Transverse colon (tissue), 4 donors: ENCODE measurements at regions of chr14 and their contacts with region 1.

Region 1: DNA sequence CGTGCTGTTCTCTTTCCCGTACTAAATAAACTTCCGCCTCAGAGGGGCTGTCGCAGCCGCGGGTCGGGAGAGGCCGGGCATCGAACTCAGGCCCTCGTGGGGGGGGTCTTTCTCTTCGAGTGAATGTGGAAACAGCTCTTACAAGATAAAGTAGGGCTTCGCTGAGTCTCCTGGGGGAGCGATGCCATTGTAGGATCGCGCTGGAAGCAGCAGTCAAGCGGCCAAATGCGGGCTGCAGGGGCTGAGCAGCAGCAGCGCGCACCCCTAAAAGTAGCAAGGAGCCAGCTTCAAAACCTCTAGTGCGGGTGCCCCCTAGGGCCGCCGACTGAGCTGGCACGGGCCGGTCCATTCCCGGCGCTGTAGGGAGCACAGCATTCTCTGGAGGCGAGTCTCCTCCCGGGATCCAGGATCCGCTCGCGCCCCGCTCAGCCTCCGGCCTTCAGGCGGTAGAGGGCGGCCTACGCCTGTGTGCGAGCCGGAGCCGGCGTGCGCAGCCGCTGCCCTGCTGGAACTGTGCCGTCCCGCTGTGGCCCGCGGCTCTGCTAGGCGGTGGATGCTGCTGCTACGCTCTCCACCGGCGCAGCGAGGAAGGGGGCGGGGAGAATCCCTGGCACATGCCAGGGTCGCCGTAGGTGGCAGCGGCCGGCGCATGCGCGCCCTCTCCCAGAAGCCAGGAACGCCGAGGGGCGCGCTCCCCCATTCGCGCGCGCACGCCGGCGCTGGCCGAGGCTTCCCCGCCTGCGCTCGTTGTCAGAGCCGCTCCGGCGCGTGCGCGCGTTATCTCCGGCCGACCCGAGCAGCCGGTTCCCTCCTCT is at the start of gene FUT8:
- DNase-seq: peak; percentile 96
- H3K4me3 ChIP-seq: peak within 1 kb of the TSS; percentile 49 to 86 (median 84)
- H3K27ac ChIP-seq: peak within 1 kb of the TSS; percentile 89 to 98 (median 94)
- H3K4me1 ChIP-seq: peaks cover 0 to 21% (median 7%) of the 10 kb centered on the region in 4 donors
- H3K27me3 ChIP-seq: no peaks in the 10 kb centered on the region
- CTCF ChIP-seq: peak; percentile 37 to 65 (median 52)
- EP300 ChIP-seq: no peak
- POLR2A ChIP-seq: peak; percentile 71
- total RNA-seq, gene FUT8: 7.9 to 27.5 (median 12.8) TPM

Region 2: GRCh38 chr14:65164068-65164824 is 248.0 kb before region 1 on chr14:
- in situ Hi-C with region 1: loop called in 1 of 4 experiments (anchors 10 kb)
- intact Hi-C with region 1: no loop called
- DNase-seq: no peak
- H3K4me3 ChIP-seq: no peak overlapping the region
- H3K27ac ChIP-seq: no peak overlapping the region
- H3K4me1 ChIP-seq: no peaks in the 10 kb centered on the region
- H3K27me3 ChIP-seq: no peaks in the 10 kb centered on the region
- CTCF ChIP-seq: peak; percentile 55 to 70 (median 63)
- EP300 ChIP-seq: no peak
- POLR2A ChIP-seq: no peak

Region 3: GRCh38 chr14:65222440-65222858 is 189.8 kb before region 1 on chr14:
- in situ Hi-C with region 1: loop called in 2 of 4 experiments (anchors 10 to 25 kb)
- intact Hi-C with region 1: no loop called
- DNase-seq: peak; percentile 68
- H3K4me3 ChIP-seq: no peak overlapping the region
- H3K27ac ChIP-seq: no peak overlapping the region
- H3K4me1 ChIP-seq: peaks cover 5 to 33% (median 10%) of the 10 kb centered on the region in 4 donors
- H3K27me3 ChIP-seq: no peaks in the 10 kb centered on the region
- CTCF ChIP-seq: peak; percentile 72 to 82 (median 78)
- EP300 ChIP-seq: no peak
- POLR2A ChIP-seq: no peak

Region 4: GRCh38 chr14:65824285-65824977 is 412.2 kb after region 1 on chr14:
- in situ Hi-C with region 1: loop called in 2 of 4 experiments (anchors 10 kb)
- intact Hi-C with region 1: loop called (anchors 5 kb)
- DNase-seq: peak; percentile 61
- H3K4me3 ChIP-seq: no peak overlapping the region
- H3K27ac ChIP-seq: no peak overlapping the region
- H3K4me1 ChIP-seq: peaks cover 0 to 4% (median 0%) of the 10 kb centered on the region in 4 donors
- H3K27me3 ChIP-seq: no peaks in the 10 kb centered on the region
- CTCF ChIP-seq: peak; percentile 91 to 95 (median 92)
- EP300 ChIP-seq: no peak
- POLR2A ChIP-seq: no peak

Region 5: DNA sequence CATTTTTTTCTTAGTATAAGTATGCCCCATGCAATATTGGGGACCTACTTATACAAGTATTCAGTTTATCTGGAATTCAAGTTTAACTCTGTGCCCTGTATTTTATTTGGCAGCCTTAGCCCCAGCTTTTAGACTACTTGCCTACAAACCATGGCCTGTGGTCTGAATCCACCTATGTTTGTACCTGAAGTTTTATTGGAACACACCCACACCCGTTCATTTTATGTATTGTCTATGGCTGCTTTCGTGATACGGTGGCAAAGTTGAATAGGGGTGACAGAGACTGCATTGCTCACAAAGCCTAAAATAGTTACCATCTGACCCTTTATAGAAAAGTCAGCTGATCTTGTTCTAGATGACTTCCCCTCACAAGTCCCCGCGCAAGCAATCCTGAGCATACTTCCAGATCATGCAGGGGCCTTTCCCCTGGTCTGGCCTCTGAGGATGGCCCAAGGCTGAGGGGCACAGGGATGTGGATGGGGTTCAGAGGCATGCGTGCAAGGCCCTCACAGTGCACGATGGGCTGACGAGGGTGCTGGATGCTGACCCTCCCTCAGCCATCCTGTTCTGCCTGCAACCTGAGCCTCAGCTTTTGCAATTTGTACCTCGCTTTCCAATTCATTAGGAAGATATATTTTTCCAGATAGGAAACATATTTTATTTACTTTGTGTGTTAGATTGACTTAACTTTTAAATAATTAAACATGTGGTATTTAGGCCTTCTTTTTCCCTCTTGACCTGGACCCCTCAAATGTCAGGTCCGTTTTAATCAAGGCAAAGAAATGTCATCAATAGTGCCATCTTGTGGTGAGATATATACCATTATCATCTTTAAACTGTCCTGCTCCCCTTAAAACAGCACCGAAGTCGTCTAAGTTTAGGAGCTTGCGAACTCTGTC is 546.7 kb after region 1 on chr14:
- in situ Hi-C with region 1: loop called in 2 of 4 experiments (anchors 25 kb)
- intact Hi-C with region 1: no loop called
- DNase-seq: no peak
- H3K4me3 ChIP-seq: no peak overlapping the region
- H3K27ac ChIP-seq: no peak overlapping the region
- H3K4me1 ChIP-seq: peaks cover 0 to 9% (median 4%) of the 10 kb centered on the region in 4 donors
- H3K27me3 ChIP-seq: no peaks in the 10 kb centered on the region
- CTCF ChIP-seq: peak; percentile 44 to 59 (median 51)
- EP300 ChIP-seq: no peak
- POLR2A ChIP-seq: no peak

Region 6: DNA sequence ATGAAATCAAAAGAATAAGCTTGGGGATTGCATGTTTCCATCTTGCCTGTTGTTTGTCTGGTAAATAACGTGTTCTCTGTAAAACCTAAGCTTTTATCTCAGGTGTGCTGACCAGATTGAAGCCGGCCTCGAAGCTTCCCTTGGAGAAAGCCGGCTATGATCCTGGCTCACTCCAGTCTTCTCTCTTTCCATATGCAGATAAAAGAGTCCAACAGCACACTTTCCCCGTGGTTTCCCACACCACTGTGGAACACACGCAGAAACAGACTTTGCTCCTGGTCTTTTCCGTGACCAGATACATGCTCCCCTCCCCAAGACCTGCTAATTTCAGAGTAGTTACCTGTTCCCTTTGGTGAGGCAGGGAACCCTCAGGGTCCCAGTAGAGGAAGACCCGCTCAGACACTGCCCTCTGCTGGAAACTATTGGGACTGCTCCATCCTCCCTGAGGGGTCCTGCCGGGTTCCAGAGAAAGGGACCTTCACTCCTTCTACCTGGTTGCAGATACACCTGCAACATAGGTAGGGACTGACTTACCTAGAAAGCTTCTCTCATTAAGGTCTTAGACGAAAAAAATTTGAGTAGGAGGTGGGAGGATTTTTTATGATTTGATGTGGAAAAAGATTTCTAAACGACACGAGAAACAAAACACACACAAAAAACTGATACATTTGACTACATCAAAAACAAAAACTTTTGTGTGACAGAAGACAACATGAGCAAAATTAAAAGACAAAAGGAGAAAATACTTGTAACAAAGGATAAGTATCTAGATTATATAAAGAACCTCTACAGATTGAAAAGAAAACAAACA is 658.5 kb after region 1 on chr14:
- in situ Hi-C with region 1: loop called in 2 of 4 experiments (anchors 25 kb)
- intact Hi-C with region 1: no loop called
- DNase-seq: peak; percentile 60
- H3K4me3 ChIP-seq: no peak overlapping the region
- H3K27ac ChIP-seq: no peak overlapping the region
- H3K4me1 ChIP-seq: no peaks in the 10 kb centered on the region
- H3K27me3 ChIP-seq: no peaks in the 10 kb centered on the region
- CTCF ChIP-seq: peak; percentile 69 to 84 (median 75)
- EP300 ChIP-seq: no peak
- POLR2A ChIP-seq: no peak